ENCODE measurements at regions of chr16 and their contacts with region 1.

Region 1: GRCh38 chr16:67470359-67470758 is 10.6 kb downstream of the ATP6V0D1 start:
- DNase-seq: no peak
- H3K4me3 ChIP-seq: no peak overlapping the region
- H3K27ac ChIP-seq: no peak overlapping the region
- H3K27me3 ChIP-seq: no peaks in the 10 kb centered on the region
- CTCF ChIP-seq: no peak

Region 2: GRCh38 chr16:67447508-67448076 is 22.8 kb before region 1 on chr16:
- CTCF ChIA-PET with region 1: interaction called, 11 read pairs
- POLR2A ChIA-PET with region 1: no interaction called
- DNase-seq: peak; percentile 37
- H3K4me3 ChIP-seq: no peak overlapping the region
- H3K27ac ChIP-seq: peak overlapping the region; percentile 47
- H3K27me3 ChIP-seq: no peaks in the 10 kb centered on the region
- CTCF ChIP-seq: peak; percentile 55

Region 3: GRCh38 chr16:67456391-67457081 is 13.8 kb before region 1 on chr16:
- CTCF ChIA-PET with region 1: interaction called, 15 read pairs
- POLR2A ChIA-PET with region 1: no interaction called
- DNase-seq: no peak
- H3K4me3 ChIP-seq: no peak overlapping the region
- H3K27ac ChIP-seq: peak overlapping the region; percentile 47
- H3K27me3 ChIP-seq: no peaks in the 10 kb centered on the region
- CTCF ChIP-seq: peak; percentile 62

Region 4: DNA sequence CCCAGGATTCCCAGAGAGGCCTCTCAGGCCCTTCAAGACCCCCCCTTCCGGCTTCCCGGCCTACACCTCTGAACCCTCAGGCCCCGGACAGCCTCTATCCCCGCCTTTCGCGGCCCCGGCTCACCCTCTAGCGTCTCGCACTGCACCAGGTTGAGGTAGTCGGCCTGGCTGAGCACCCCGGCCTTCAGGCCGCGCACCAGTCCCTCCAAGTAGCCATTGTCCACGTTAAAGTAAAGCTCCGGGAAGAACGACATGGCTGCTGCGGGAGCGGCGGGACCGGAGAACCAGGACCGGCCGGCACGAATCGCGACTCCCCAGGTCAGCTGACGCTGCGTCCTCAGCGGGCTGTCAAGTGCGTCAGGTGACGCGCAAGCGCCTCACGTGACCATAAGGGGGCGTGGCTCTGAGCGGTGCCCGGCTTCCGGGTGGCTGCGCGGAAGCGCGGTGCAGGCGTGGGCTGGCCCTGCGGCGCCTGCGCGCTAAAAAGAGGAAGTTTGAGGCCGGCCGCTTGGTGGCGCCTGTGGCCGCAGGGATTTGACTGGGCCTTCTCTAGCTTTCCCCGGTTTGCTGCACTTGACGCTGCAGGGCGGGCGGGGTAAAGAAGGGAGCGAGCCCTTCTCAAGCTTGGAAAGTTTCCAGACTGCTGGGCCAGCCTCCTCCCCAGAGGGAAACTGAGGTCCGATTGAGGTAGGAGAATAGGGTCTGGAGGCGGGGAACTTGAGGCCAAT is 10.6 kb after region 1 on chr16 and contains the start of gene ATP6V0D1:
- CTCF ChIA-PET with region 1: interaction called, 12 read pairs
- POLR2A ChIA-PET with region 1: interaction called, 4 read pairs
- DNase-seq: peak; percentile 96
- H3K4me3 ChIP-seq: peak within 1 kb of the TSS; percentile 96
- H3K27ac ChIP-seq: peak within 1 kb of the TSS; percentile 92
- H3K27me3 ChIP-seq: no peaks in the 10 kb centered on the region
- CTCF ChIP-seq: peak; percentile 89
- polyA plus RNA-seq, gene ATP6V0D1: 101 and 121 TPM in 2 replicates

Measured in AG04450 (cell line).